Posterior vena cava (tissue), 2 donors: ENCODE measurements at regions of chr19 and their contacts with region 1.

Region 1: GRCh38 chr19:48069435-48069834 is 25.6 kb upstream of the CABP5 start:
- DNase-seq: no peak

Region 2: DNA sequence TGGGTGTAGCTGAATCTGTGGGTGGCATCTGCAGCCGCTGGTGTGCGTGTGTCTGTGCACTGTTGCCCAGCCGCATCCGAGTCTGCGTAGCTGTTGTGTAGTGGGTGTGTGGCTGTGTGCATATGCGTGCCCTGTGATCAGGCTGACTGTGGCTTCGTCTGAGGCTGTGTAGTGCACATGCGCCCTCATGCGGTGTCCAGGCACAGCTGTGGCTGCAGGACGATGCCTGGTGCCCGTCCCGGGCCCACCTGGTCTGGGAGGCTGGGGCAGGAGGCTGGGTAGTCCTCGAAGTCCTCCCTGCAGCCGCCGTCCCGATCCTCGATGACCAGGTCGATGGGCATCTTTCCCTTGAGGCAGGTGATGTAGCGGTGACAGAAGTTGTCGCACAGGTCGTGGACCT is 655.0 kb before region 1 on chr19:
- intact Hi-C with region 1: loop called in 1 of 2 experiments (anchors 5 kb)
- DNase-seq: no peak